Activated CD8-positive, alpha-beta T cell treated with anti-CD3 and anti-CD28 coated beads for 36 hours (primary cell): ENCODE measurements at regions of chr2 and their contacts with region 1.

Region 1: GRCh38 chr2:27249891-27250651 is 12.8 kb downstream of the SLC30A3 start:
- DNase-seq: peak; percentile 77
- ATAC-seq: peak; percentile 94
- H3K4me3 Mint-ChIP-seq: no peak overlapping the region
- H3K27ac Mint-ChIP-seq: no peak overlapping the region
- H3K4me1 Mint-ChIP-seq: no peaks in the 10 kb centered on the region
- H3K27me3 Mint-ChIP-seq: peaks cover 9% of the 10 kb centered on the region
- CTCF ChIP-seq: peak; percentile 91

Region 2: GRCh38 chr2:26157580-26157979 is 1092.5 kb before region 1 on chr2:
- CTCF ChIA-PET with region 1: no interaction called
- POLR2A ChIA-PET with region 1: no interaction called
- intact Hi-C with region 1: no loop called
- DNase-seq: no peak
- ATAC-seq: no peak
- H3K4me3 Mint-ChIP-seq: no peak overlapping the region
- H3K27ac Mint-ChIP-seq: no peak overlapping the region
- H3K4me1 Mint-ChIP-seq: no peaks in the 10 kb centered on the region
- H3K27me3 Mint-ChIP-seq: peaks cover 3% of the 10 kb centered on the region
- CTCF ChIP-seq: no peak

Region 3: DNA sequence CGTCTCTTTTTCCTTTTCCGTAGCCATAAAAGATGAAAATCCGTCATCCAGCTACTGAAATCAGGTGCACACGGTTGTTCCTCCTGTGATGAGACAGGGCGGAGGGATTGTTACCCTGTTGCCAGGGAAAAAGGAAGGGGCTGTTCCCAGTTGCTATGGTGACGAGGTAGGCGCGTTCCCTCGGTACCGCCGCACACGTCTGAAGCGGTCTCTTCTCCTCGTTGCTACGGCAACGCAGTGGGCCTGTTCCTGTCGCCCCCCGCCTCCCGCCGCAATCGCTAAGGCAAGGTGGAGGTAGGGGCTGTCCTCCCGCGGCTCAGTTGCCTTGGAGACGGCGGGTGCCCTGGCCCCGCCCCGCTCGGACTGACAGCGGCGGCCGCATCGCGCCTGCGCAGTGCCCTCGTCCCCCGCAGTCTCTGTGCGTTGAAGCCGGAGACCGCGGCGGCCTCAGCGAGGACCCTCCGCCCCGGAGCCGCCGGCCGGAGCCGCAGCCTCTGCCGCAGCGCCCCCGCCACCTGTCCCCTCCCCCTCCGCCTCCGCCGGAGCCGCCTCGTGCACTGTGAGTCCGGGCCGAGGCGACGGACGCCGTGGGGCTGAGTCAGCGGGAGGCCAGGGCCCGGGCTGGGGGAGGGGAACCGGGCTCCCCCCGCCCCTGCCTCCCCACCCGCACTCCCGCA is 279.7 kb before region 1 on chr2 and contains the start of gene MAPRE3:
- CTCF ChIA-PET with region 1: no interaction called
- POLR2A ChIA-PET with region 1: no interaction called
- intact Hi-C with region 1: no loop called
- DNase-seq: peak; percentile 79
- ATAC-seq: peak; percentile 91
- H3K4me3 Mint-ChIP-seq: peak within 1 kb of the TSS; percentile 74
- H3K27ac Mint-ChIP-seq: no peak within 1 kb of the TSS
- H3K4me1 Mint-ChIP-seq: peaks cover 16% of the 10 kb centered on the region
- H3K27me3 Mint-ChIP-seq: peaks cover 16% of the 10 kb centered on the region
- CTCF ChIP-seq: no peak
- total RNA-seq, gene MAPRE3: 1.6 to 1.7 TPM

Region 4: GRCh38 chr2:27123302-27124231 is 126.5 kb before region 1 on chr2 and contains the start of gene ABHD1:
- CTCF ChIA-PET with region 1: no interaction called
- POLR2A ChIA-PET with region 1: no interaction called
- intact Hi-C with region 1: no loop called
- DNase-seq: peak; percentile 58
- ATAC-seq: peak; percentile 79
- H3K4me3 Mint-ChIP-seq: peak within 1 kb of the TSS; percentile 73
- H3K27ac Mint-ChIP-seq: peak within 1 kb of the TSS; percentile 72
- H3K4me1 Mint-ChIP-seq: peaks cover 14% of the 10 kb centered on the region
- H3K27me3 Mint-ChIP-seq: peaks cover 12% of the 10 kb centered on the region
- CTCF ChIP-seq: no peak
- total RNA-seq, gene ABHD1: 0.36 to 0.50 TPM

Region 5: DNA sequence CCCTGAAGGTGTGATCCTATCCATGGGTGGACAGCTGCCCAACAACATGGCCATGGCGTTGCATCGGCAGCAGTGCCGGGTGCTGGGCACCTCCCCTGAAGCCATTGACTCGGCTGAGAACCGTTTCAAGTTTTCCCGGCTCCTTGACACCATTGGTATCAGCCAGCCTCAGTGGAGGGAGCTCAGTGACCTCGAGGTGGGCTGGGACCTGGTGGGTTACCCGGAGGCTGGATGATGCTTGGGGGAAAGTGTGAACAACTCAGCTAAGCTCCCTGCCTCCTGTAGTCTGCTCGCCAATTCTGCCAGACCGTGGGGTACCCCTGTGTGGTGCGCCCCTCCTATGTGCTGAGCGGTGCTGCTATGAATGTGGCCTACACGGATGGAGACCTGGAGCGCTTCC is 16.7 kb before region 1 on chr2:
- CTCF ChIA-PET with region 1: interaction called, 6 read pairs
- POLR2A ChIA-PET with region 1: interaction called, 18 read pairs
- intact Hi-C with region 1: no loop called
- DNase-seq: no peak
- ATAC-seq: no peak
- H3K4me3 Mint-ChIP-seq: no peak overlapping the region
- H3K27ac Mint-ChIP-seq: no peak overlapping the region
- H3K4me1 Mint-ChIP-seq: no peaks in the 10 kb centered on the region
- H3K27me3 Mint-ChIP-seq: no peaks in the 10 kb centered on the region
- CTCF ChIP-seq: no peak

Region 6: DNA sequence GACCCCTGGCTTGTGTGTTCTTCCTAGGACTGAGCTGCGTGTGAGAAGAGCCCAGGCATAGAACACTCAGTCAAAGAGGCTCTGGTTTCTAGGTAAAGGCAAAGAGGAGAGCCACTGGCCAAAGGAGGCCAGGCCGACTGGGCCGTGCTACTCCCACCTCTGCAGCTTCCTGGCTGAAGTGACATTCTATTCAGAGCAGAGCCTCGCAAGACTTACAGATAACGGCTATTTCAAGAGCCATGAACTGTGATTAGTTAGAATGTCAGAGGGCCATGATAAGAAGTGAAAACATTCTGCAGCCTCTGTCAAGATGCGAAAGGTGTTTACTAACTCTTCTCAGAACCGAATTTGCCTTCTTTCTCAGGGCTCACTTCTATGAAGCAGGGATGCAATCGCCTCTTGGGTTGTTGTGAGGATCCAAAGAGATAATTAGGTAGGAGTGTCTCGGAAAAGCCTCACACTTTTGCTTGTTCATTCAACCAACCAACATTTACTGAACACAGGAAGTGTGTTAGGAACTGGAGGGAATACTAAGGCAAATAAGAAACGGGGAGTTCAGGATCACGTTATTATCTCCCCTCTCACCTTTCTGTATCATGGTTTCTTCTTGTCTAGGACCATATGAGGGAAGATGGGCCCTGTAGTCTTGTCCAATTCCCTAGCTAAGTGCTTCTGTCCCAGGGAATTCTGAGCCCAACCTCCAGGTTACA is 21.7 kb after region 1 on chr2:
- CTCF ChIA-PET with region 1: interaction called, 11 read pairs
- POLR2A ChIA-PET with region 1: interaction called, 3 read pairs
- intact Hi-C with region 1: no loop called
- DNase-seq: no peak
- ATAC-seq: no peak
- H3K4me3 Mint-ChIP-seq: no peak overlapping the region
- H3K27ac Mint-ChIP-seq: no peak overlapping the region
- H3K4me1 Mint-ChIP-seq: no peaks in the 10 kb centered on the region
- H3K27me3 Mint-ChIP-seq: peaks cover 4% of the 10 kb centered on the region
- CTCF ChIP-seq: no peak

Region 7: DNA sequence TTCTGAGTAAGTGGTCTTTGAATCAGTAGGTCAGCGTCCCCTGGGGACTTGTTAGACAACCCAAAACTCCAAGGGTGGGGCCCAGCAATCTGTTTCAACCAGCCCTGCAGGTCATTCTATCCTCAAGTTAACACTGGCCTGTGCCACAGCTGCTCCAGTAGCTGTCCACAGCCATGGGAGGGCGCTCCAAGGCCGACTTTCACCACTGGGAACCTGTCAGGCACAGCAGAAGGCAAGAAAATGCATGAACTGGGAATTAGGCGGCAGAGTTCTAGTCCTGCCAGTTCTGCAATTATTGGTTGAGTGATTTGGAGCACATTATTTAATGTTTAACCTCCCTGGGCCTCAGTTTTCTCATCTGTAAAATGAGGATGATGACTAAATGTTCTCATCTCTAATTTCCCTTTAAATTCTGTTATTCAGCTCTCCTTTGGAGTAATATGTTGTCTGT is 504.1 kb after region 1 on chr2:
- CTCF ChIA-PET with region 1: no interaction called
- POLR2A ChIA-PET with region 1: no interaction called
- intact Hi-C with region 1: no loop called
- DNase-seq: peak; percentile 86
- ATAC-seq: peak; percentile 98
- H3K4me3 Mint-ChIP-seq: no peak overlapping the region
- H3K27ac Mint-ChIP-seq: no peak overlapping the region
- H3K4me1 Mint-ChIP-seq: no peaks in the 10 kb centered on the region
- H3K27me3 Mint-ChIP-seq: peaks cover 5% of the 10 kb centered on the region
- CTCF ChIP-seq: peak; percentile 98